T-cell (primary cell): ENCODE measurements at regions of chr4 and their contacts with region 1.

Region 1: GRCh38 chr4:82388405-82388804 is 14.6 kb upstream of the HNRNPD start:
- DNase-seq: no peak
- ATAC-seq: peak in 1 of 4 experiments; percentile 38
- H3K4me3 ChIP-seq: no peak overlapping the region
- H3K4me3 Mint-ChIP-seq: no peak overlapping the region
- H3K27ac ChIP-seq: no peak overlapping the region
- H3K27ac Mint-ChIP-seq: no peak overlapping the region
- H3K4me1 ChIP-seq: no peaks in the 10 kb centered on the region
- H3K4me1 Mint-ChIP-seq: no peaks in the 10 kb centered on the region
- H3K27me3 ChIP-seq: peaks cover 0 to 3% of the 10 kb centered on the region in 2 experiments
- H3K27me3 Mint-ChIP-seq: no peaks in the 10 kb centered on the region

Region 2: DNA sequence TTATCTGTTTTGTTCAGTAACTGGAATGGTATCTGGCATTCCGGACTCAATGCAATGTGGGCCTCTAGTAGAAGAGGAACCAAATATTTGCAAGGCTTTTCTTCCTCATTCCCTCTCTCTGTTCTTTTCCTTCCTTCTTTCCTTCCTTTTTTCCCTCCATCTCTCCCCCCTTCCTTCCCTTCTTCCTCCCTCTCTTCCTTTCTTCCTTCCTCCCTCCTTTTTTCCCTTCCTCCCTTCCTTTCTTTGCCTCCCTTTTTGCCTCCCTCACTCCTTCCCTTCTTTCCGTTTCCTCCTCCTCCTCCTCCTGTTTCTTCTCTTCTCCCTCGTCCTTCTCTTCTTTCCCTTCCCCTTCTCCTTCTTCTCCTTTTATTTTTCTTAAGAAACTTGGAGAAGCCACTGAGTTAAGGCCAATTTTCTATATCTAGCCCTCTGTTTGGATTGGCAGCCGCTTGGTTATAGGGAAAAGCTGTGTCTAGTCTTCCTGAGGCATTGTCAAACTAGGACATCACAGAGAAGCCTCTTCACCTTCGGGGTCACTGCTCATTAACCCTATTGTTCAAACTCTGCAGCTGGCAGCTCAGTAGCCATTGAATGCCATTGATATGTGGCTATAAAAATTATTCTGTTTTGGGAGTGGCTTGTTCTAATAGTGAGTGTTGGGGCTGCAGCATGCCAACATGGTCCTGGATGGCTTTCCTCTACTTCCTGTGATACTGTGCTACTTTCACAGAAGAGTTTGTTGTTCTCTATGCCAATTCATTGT is 1957.0 kb before region 1 on chr4:
- CTCF ChIA-PET with region 1: interaction called in 1 of 2 experiments, 11 read pairs
- POLR2A ChIA-PET with region 1: no interaction called
- DNase-seq: no peak
- ATAC-seq: no peak
- H3K4me3 ChIP-seq: no peak overlapping the region
- H3K4me3 Mint-ChIP-seq: no peak overlapping the region
- H3K27ac ChIP-seq: no peak overlapping the region
- H3K27ac Mint-ChIP-seq: no peak overlapping the region
- H3K4me1 ChIP-seq: peaks cover 0 to 2% of the 10 kb centered on the region in 2 experiments
- H3K4me1 Mint-ChIP-seq: peaks cover 9 to 15% (median 15%) of the 10 kb centered on the region in 3 donors
- H3K27me3 ChIP-seq: no peaks in the 10 kb centered on the region
- H3K27me3 Mint-ChIP-seq: no peaks in the 10 kb centered on the region